Motor neuron (in vitro differentiated cells): ENCODE measurements at regions of chr10 and their contacts with region 1.

Region 1: DNA sequence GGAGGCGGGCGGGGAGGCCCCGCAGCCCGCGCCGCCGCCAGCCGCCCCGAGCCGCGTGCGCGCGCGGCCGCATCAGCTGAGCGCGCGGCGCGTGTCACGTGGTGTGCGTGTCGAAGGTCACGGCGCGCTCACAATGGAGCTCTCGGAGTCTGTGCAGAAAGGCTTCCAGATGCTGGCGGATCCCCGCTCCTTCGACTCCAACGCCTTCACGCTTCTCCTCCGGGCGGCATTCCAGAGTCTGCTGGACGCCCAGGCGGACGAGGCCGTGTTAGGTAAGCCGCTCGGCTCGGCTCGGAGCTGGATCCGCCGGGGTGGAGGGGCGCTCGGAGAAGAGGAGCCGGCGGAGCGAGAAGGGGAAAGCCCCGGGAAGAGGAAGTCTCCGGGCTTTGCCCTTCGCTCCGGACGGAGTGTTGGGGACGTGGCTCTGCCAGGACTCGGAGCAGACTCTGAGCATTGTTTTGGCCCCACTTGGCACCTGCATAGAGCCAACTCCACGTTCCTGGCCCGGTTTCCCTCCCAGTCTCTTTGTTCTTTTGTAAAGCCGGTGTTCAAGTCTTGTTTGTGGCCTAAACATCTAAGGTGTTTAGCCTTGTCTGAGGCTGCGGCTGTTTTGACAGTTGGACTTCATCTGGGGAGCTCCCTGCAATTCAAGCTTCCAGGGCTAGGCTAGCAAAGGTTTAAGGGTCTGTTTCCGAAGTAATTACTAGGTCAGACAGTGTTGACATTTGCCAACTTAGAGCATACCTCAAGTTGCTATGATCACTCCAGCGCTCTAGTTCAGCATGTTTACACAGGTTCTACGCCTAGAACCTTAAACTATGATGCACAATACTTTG is at the start of gene COMMD3:
- ATAC-seq: peak; percentile 62 to 75 (median 70)
- H3K4me3 ChIP-seq: peak within 1 kb of the TSS; percentile 84 to 93 (median 89)
- H3K27ac ChIP-seq: peak within 1 kb of the TSS; percentile 87 to 90
- H3K4me1 ChIP-seq: peaks cover 7 to 17% of the 10 kb centered on the region in 2 donors
- total RNA-seq, gene COMMD3: 62.3 to 106 (median 79.1) TPM

Region 2: GRCh38 chr10:21516242-21517131 is 800.0 kb before region 1 on chr10:
- in situ Hi-C with region 1: loop called in 1 of 9 experiments (anchors 25 kb)
- ATAC-seq: peak; percentile 7 to 76 (median 31)
- H3K4me3 ChIP-seq: peak overlapping the region; percentile 67 to 92 (median 86)
- H3K27ac ChIP-seq: peak overlapping the region; percentile 79 to 93
- H3K4me1 ChIP-seq: peaks cover 8 to 33% of the 10 kb centered on the region in 2 donors

Region 3: DNA sequence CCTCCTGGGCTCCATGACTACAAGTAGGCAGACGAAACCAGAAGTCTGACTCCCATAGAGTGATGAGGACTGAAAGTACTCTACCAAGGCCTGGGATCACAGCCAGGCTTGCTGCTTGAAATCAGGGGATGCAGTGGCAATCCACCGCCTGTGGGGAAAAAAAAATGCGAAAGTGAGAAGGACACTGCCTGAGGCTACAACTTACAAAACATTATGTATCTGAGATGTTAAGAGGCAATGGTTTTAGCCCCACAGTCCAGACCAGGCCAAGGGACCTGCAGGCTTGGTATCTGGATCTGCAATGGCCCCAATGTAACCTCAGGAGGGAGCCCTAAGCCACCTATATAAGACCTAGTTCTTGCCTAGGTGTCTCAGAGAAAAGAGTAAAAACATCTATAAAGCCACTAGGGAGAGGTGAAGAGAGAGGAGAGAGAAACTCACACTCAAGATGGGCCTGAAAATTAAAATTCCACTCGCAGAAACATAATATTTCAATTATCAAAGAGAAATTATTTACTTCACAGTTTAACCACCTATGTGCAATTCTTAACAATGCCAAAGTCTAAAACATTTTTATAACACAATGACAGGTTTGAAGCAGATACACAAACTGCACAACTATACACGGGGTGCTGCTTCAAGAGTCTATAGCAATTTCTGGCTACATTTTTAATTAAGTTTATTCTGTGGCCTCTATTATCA is 326.9 kb before region 1 on chr10:
- in situ Hi-C with region 1: loop called in 1 of 9 experiments (anchors 25 kb)
- ATAC-seq: peak; percentile 79 to 99 (median 92)
- H3K4me3 ChIP-seq: no peak overlapping the region
- H3K27ac ChIP-seq: no peak overlapping the region
- H3K4me1 ChIP-seq: no peaks in the 10 kb centered on the region

Region 4: DNA sequence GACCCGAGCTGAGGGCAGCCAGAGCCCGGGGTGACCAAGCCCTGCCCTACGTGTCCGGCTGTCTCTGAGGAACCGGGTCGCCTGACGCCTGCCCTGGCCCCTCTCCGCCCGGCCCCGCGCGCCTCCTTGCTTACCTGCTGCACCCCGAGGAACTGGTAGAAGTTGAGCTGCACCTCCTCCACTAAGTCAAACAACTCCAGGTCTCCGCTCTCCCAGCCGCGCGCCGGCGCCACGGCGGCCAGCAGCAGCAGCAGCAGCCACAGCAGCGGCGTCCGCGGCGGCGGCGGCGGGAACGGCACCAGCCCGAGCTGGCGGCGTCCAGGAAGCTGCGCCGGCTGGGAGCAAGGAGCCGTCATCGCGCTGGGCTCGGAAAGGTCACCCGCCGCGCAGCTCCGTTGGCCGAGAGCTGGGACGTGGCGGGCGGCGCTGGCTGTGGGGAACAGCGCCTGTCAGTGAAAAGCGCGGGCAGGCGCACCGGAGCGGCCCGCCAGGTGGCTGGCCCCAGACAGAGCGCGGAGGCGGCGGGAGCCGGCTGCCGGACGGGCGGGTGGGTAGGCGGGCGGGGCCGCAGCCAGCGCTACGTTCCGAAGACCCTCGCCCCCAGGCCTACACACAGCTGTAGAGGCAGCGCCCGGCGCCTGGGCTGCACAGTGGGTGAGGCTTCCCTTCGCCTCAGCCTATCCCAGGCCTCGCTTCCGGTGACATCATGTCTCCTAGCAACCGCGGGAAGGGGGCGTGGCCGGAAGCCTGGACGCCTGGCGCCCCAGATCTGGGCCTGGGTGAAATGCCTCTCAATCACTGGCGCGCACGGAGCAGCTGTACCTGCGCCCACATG is 313.2 kb before region 1 on chr10 and contains the start of gene DNAJC1:
- in situ Hi-C with region 1: loop called in 3 of 9 experiments (anchors 25 kb)
- ATAC-seq: peak; percentile 92 to 98 (median 98)
- H3K4me3 ChIP-seq: peak within 1 kb of the TSS; percentile 51 to 75 (median 58)
- H3K27ac ChIP-seq: peak within 1 kb of the TSS; percentile 89
- H3K4me1 ChIP-seq: peaks cover 11 to 12% of the 10 kb centered on the region in 2 donors
- total RNA-seq, gene DNAJC1: 13.6 to 46.2 (median 28.3) TPM